PC-9 (cell line): ENCODE measurements at regions of chr11 and their contacts with region 1.

Region 1: GRCh38 chr11:33829433-33830141 is 55.3 kb upstream of the FBXO3 start:
- DNase-seq: peak; percentile 62 to 70
- H3K4me3 ChIP-seq: peak overlapping the region; percentile 54
- H3K27ac ChIP-seq: no peak overlapping the region
- H3K4me1 ChIP-seq: peaks cover 18% of the 10 kb centered on the region
- H3K27me3 ChIP-seq: no peaks in the 10 kb centered on the region
- CTCF ChIP-seq: peak; percentile 88

Region 2: GRCh38 chr11:32312865-32313403 is 1516.7 kb before region 1 on chr11:
- CTCF ChIA-PET with region 1: no interaction called
- POLR2A ChIA-PET with region 1: no interaction called
- intact Hi-C with region 1: loop called (anchors 5 kb)
- DNase-seq: peak; percentile 29 to 70
- H3K4me3 ChIP-seq: peak overlapping the region; percentile 30; the same call in 1 of the 2 replicates
- H3K27ac ChIP-seq: peak overlapping the region; percentile 86
- H3K4me1 ChIP-seq: peaks cover 25% of the 10 kb centered on the region
- H3K27me3 ChIP-seq: no peaks in the 10 kb centered on the region
- CTCF ChIP-seq: peak; percentile 89

Region 3: DNA sequence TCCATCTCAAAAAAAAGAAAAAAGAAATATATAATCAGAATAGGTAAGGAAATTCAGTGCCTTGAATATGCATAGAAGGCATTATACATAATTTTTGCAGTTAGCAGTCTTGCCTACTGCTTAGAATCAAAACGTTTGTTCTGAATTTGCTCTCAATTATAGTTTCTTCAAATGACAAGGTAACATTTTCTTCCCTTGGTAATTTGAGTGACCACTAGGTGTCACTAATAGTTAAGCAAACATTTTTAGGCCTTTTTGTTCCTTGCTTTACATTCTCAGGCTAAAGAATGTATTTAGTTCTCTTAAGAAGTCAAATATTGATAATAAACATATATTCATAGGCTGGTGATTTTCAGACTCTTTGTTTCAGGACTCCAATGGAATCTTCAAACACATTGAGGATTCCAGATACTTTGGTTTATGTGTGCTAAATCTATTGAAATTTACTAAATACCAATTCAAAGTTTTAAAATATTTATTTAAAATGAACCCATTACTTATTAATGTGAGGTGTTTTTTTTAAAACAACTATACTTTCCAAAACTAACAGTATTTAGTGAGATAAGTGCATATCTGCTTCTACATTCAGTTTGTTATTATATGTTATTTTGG is 868.9 kb before region 1 on chr11:
- CTCF ChIA-PET with region 1: no interaction called
- POLR2A ChIA-PET with region 1: no interaction called
- intact Hi-C with region 1: loop called (anchors 10 kb)
- DNase-seq: peak in 1 of 2 experiments; percentile 59
- H3K4me3 ChIP-seq: no peak overlapping the region
- H3K27ac ChIP-seq: no peak overlapping the region
- H3K4me1 ChIP-seq: no peaks in the 10 kb centered on the region
- H3K27me3 ChIP-seq: no peaks in the 10 kb centered on the region
- CTCF ChIP-seq: peak; percentile 90

Region 4: DNA sequence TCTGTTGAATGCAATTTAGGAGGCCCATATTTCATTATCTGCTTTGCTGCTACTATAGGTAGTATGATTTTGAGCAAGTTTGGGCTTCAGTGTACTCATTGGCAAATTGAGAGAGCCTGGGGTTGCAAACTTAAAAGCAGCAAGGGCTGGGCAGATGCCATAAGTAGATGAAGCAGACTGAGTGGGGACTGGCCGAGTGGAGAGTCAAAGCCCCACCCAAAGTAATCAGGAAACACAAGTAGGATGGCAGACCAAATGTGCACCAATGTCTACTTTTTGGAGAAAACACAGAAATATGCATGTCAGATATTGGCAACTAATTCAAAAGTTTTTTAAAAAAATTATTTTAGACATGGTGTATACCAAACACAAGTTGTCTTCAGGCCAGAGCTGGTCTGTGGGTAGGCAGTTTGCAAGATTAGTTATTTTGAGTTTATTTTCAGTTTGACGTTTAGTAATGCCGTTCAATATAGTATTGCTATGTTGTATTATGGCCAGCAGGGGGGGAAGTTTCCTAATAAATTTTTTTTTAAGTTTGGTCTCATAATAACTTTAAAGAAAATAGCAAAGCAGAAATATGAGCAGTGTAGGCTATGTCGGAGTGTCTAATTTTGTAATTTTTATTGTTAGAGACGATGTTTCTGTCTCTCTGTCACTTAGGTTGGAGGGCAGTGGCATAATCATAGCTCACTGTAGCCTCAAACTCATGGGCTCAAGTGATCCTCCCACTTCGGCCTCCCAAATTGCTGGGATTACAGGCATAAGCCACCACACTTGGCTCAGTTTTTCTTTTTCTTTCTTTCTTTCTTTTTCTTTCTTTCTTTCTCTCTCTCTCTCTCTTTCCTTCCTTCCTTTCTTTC is 467.3 kb before region 1 on chr11:
- CTCF ChIA-PET with region 1: no interaction called
- POLR2A ChIA-PET with region 1: no interaction called
- intact Hi-C with region 1: loop called (anchors 2 kb)
- DNase-seq: peak in 1 of 2 experiments; percentile 54
- H3K4me3 ChIP-seq: no peak overlapping the region
- H3K27ac ChIP-seq: no peak overlapping the region
- H3K4me1 ChIP-seq: no peaks in the 10 kb centered on the region
- H3K27me3 ChIP-seq: no peaks in the 10 kb centered on the region
- CTCF ChIP-seq: peak; percentile 91

Region 5: DNA sequence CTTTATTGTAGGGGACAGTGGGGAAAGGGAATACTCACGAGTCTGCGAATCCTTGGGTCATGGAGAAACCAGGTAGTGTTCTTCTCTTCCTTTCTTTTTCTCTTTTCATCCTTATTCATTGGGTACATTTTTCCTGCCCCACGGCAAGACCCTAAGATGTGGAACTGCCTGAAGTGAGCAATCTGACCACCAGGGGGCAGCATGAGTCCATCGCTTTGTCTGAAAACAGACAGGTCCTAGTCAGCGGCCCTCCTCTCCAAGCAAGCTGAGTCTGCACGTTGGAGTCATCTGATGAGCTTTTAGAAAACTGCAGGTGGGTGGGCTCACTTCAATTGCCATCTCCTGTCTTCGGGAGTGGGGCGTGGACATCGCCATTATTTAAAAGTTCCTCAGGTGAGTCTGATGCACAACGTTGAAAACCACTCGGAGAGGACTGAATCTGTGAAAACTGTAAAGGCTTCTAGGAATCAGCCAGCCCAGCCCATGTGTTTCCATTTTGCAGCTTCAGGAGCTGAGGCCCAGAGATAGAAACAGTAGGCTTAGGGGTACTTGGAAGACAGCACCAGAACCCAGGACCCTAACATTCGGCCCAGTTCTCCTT is 21.3 kb before region 1 on chr11:
- CTCF ChIA-PET with region 1: interaction called, 16 read pairs
- POLR2A ChIA-PET with region 1: interaction called, 4 read pairs
- intact Hi-C with region 1: loop called (anchors 1 kb)
- DNase-seq: peak; percentile 65 to 84
- H3K4me3 ChIP-seq: no peak overlapping the region
- H3K27ac ChIP-seq: no peak overlapping the region
- H3K4me1 ChIP-seq: no peaks in the 10 kb centered on the region
- H3K27me3 ChIP-seq: no peaks in the 10 kb centered on the region
- CTCF ChIP-seq: peak; percentile 98

Region 6: DNA sequence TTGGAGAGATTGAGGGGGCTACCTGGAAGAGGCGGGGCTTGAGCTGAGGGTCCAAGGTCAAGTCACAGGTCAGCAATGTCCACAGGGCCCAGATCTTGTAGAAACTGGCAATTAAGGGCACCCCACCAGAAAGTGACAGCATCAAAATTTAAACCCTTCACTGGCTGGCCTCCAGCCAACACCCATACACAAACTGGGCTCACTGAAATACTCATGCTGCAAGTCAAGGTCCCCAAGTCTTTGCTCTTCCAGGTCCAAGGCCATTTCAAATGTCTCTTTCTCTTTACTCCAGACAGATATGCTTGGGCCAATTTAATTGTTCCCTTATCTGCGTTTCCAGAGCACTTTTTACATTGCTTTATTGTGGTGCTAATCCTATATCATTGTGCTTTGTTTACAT is 25.9 kb after region 1 on chr11:
- CTCF ChIA-PET with region 1: no interaction called
- POLR2A ChIA-PET with region 1: no interaction called
- intact Hi-C with region 1: no loop called
- DNase-seq: no peak
- H3K4me3 ChIP-seq: no peak overlapping the region
- H3K27ac ChIP-seq: no peak overlapping the region
- H3K4me1 ChIP-seq: no peaks in the 10 kb centered on the region
- H3K27me3 ChIP-seq: peaks cover 20% of the 10 kb centered on the region; the same call in 1 of the 2 replicates
- CTCF ChIP-seq: no peak

Region 7: GRCh38 chr11:34624069-34624468 is 794.5 kb after region 1 on chr11:
- CTCF ChIA-PET with region 1: no interaction called
- POLR2A ChIA-PET with region 1: interaction called, 11 read pairs
- intact Hi-C with region 1: no loop called
- DNase-seq: peak; percentile 79 to 80
- H3K4me3 ChIP-seq: peak overlapping the region; percentile 89
- H3K27ac ChIP-seq: peak overlapping the region; percentile 96
- H3K4me1 ChIP-seq: peaks cover 67% of the 10 kb centered on the region
- H3K27me3 ChIP-seq: no peaks in the 10 kb centered on the region
- CTCF ChIP-seq: peak; percentile 27; the same call in 1 of the 2 replicates